ENCODE measurements at regions of chr22 and their contacts with region 1.

Region 1: DNA sequence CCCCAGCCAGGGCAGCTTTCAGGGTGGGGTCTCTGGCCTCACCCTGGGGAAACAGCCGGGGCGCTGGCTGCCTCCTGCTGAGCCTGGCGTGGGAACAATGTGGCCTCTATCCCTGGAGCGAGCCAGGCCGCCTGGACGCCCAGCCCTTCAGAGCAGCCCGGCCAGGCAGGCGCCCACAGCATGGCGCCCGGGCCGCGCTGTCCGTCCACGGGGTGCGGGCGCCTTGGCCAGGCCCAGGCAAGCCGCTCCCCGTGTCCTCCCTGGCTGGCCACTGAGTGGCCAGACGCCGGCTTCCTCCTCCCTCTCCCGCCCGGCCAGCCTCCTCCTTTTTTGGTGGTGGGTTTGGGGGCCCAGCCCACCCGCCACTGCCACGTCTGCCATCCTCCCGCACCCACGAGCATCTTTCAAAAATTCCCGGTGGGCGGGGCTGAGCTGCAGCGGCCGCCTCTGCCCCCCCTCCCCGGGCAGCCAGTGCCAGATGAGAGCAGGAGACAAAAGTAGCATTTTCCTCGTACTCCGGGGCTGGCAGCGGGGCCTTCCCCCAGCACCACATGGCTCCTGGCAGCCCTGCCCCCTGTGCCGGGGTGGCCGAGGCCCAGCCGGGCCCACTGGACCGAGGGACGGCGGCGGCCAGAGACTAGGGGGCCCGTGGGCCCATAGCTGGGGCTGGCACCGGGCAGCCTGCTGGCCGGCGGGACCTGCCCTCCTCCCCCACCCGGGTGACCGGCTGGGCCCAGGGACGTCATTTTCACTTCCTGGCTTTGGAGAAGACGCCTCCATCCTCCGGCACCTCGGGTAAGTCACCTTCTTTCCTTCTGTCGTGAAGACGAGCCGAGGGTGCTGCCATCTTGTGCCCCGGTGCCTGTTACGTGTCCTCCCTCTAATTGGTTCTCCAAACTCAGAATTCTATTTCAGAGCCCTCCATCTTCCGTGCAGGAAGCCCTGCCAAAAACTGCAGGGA is 70.2 kb upstream of the PPARA start:
- DNase-seq: peak; percentile 75 to 89 (median 80)
- ATAC-seq: peak; percentile 3 to 61 (median 40)
- H3K4me3 ChIP-seq: peak overlapping the region; percentile 42 to 97 (median 89)
- H3K27ac ChIP-seq: peak overlapping the region; percentile 97 to 100 (median 98)
- H3K4me1 ChIP-seq: peaks cover 27 to 100% (median 87%) of the 10 kb centered on the region in 12 donors
- H3K27me3 ChIP-seq: no peaks in the 10 kb centered on the region
- CTCF ChIP-seq: peak in 1 of 12 donors; percentile 10
- POLR2A ChIP-seq: peak in 1 of 2 donors; percentile 54

Region 2: DNA sequence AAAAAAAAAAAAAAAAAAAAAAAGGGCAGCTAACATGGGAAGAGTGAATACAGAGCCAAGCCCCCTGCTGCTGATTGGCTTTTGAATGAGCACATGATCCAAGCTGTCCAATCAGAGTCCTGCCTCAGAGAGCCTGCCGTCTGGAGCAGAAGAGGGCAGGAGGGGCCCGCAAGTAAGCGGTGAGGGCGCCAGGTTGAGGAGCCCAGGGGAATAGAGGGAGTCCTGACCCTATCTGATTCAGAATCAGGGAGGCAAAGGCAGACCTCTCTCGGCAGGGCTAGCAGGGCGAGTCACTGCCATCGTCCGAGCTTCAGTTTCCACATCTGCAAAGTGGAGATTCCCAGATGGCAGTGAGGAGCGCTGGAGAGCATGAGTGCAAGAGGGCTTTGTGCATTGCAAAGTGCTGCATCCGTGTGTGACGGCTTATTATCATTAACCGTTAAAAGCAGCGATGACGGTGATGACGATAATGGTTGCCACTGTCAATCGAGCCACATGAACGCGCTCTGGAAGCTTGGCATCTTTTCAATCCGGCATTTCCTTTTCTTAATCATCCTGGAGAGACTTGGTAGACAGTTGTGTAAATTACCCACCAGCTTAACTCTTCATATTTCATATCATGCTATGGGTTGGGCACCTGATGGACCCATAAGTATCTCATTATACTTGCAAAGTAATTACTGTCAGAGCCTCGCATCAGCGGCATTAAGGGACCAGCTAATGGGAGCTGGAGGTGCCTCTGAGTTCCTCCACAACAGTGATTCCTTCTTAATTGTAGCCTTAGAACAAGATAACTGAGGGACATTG is 477.1 kb before region 1 on chr22:
- intact Hi-C with region 1: no loop called
- DNase-seq: peak in 1 of 5 donors; percentile 12
- ATAC-seq: no peak
- H3K4me3 ChIP-seq: no peak overlapping the region
- H3K27ac ChIP-seq: no peak overlapping the region
- H3K4me1 ChIP-seq: peaks cover 0 to 13% (median 0%) of the 10 kb centered on the region in 12 donors
- H3K27me3 ChIP-seq: no peaks in the 10 kb centered on the region
- CTCF ChIP-seq: no peak
- POLR2A ChIP-seq: no peak

Region 3: GRCh38 chr22:46006379-46007002 is 73.7 kb before region 1 on chr22:
- intact Hi-C with region 1: loop called in 2 of 10 experiments (anchors 5 kb)
- DNase-seq: peak; percentile 94 to 98 (median 96)
- ATAC-seq: peak; percentile 53 to 75 (median 68)
- H3K4me3 ChIP-seq: peak overlapping the region in 10 of 12 donors; percentile 9 to 52 (median 29)
- H3K27ac ChIP-seq: peak overlapping the region; percentile 74 to 100 (median 94)
- H3K4me1 ChIP-seq: peaks cover 5 to 64% (median 49%) of the 10 kb centered on the region in 12 donors
- H3K27me3 ChIP-seq: no peaks in the 10 kb centered on the region
- CTCF ChIP-seq: peak; percentile 94 to 99 (median 98)
- POLR2A ChIP-seq: no peak

Region 4: DNA sequence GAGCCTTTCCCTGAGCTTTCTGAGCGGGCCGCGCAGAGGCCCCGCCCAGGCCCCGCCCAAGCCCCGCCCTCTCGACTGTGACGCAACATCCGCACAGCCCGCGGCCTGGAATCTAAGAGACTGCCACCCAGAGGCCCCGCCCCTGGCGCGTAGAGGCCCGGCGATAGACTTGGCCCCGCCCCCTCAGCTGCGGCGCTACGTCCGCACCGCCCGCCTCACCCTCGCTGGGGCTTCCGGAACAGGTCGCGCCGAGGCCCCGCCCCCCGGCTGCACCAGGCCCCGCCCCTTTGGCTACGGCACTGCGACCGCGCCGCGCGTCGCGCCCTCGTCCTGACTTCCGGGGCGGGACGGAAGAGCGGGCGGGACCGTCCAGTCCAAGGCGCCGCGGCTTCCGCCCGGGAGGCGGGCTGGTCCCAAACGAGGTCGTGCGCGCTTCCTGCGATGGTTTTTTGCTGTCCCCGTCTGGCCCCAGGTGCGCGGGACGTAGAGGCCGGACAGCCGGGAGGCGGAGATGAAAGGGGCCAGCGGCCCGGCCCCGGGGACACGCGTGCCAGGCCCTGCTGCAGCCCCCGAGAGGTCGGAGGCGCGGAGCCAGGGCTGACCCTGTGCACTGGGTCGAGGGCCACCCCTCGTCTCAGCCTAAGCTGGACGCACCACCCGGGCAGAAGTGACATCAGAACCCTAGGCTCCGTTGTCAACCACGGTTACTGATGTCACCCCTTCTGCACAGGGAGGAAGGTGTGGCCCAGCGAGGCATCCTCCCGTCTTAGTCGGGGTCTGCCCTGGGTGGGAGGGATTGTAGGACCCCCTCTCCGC is 44.2 kb before region 1 on chr22:
- intact Hi-C with region 1: loop called in 1 of 10 experiments (anchors 5 kb)
- DNase-seq: peak; percentile 100
- ATAC-seq: peak; percentile 94 to 97 (median 96)
- H3K4me3 ChIP-seq: peak overlapping the region; percentile 35 to 86 (median 72)
- H3K27ac ChIP-seq: peak overlapping the region; percentile 87 to 99 (median 97)
- H3K4me1 ChIP-seq: peaks cover 3 to 29% (median 15%) of the 10 kb centered on the region in 12 donors
- H3K27me3 ChIP-seq: no peaks in the 10 kb centered on the region
- CTCF ChIP-seq: no peak
- POLR2A ChIP-seq: peak; percentile 57 to 96

Region 5: GRCh38 chr22:46108564-46109473 is 28.7 kb after region 1 on chr22:
- intact Hi-C with region 1: loop called in 4 of 10 experiments (anchors 5 kb)
- DNase-seq: peak in 4 of 5 donors; percentile 75 to 80 (median 75)
- ATAC-seq: peak; percentile 37 to 52 (median 48)
- H3K4me3 ChIP-seq: no peak overlapping the region
- H3K27ac ChIP-seq: peak overlapping the region; percentile 45 to 88 (median 82)
- H3K4me1 ChIP-seq: peaks cover 46 to 100% (median 97%) of the 10 kb centered on the region in 12 donors
- H3K27me3 ChIP-seq: no peaks in the 10 kb centered on the region
- CTCF ChIP-seq: peak in 1 of 12 donors; percentile 8
- POLR2A ChIP-seq: no peak

Region 6: DNA sequence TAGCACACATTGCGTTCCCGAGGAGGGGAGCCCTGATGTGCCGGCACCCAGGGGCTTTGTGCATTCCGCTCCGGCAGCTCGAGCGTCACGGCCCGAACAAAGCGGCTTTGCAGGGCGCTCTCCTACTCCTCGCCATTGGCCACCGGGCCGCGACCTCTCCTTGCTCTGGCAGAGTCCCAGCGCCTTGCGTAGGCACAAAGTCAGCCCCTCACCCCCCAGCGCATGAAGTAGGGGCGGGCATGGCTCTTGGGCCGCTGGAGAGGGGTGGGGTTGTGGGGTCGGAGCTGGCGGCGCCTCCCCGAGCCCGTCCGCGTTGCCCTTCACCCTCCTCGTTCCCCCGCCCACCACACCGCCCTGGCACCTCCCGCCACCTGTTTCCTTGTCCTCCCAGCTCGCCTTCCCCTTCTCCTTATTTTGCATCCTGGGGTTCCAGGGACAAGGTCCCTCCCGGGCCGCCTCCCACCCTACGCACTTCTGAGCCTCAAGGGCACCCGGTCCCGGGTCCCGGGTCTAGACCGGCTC is 69.4 kb after region 1 on chr22:
- intact Hi-C with region 1: no loop called
- DNase-seq: peak; percentile 71 to 83 (median 76)
- ATAC-seq: peak; percentile 63 to 80 (median 74)
- H3K4me3 ChIP-seq: peak overlapping the region; percentile 25 to 94 (median 86)
- H3K27ac ChIP-seq: peak overlapping the region; percentile 80 to 100 (median 92)
- H3K4me1 ChIP-seq: peaks cover 3 to 60% (median 35%) of the 10 kb centered on the region in 12 donors
- H3K27me3 ChIP-seq: no peaks in the 10 kb centered on the region
- CTCF ChIP-seq: no peak
- POLR2A ChIP-seq: no peak

Region 7: GRCh38 chr22:46159777-46160176 is 79.6 kb after region 1 on chr22:
- intact Hi-C with region 1: no loop called
- DNase-seq: no peak
- ATAC-seq: no peak
- H3K4me3 ChIP-seq: no peak overlapping the region
- H3K27ac ChIP-seq: no peak overlapping the region
- H3K4me1 ChIP-seq: peaks cover 0 to 32% (median 5%) of the 10 kb centered on the region in 12 donors
- H3K27me3 ChIP-seq: no peaks in the 10 kb centered on the region
- CTCF ChIP-seq: no peak
- POLR2A ChIP-seq: no peak